ENCODE measurements at regions of chr10 and their contacts with region 1.

Region 1: GRCh38 chr10:112183329-112184051 is at the start of gene GPAM:
- DNase-seq: peak; percentile 91 to 99 (median 96)

Region 2: DNA sequence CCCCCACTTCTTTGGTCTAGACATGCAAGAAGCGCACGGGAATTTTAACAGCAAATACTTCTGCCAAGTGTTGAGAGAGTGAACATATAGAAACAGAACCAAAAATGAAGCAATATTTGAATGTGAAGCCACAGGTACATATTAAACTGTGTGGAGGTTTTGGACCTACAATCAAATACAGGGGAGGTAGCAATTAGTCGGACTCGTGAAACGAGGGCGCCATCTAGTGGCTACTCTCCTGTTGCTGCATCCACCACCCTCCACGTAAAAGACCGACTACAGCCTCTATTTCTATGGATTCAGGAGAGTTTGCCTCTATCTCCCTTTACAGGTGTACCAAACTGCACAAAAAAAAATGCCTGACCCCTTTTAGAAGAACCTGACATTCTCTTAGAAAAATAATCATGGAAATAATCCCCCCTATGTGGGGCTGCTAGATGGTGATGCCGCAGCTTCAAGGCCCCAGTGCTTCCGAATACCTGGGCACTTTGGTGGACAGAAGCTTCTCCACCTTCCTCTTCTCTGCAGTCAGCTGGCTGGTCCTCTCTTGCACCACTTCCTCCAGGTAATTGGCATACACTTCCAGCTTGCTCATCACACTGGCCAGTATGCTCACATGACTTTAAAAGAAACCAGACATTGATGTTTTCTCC is 131.5 kb after region 1 on chr10:
- intact Hi-C with region 1: loop called (anchors 5 kb)
- DNase-seq: peak; percentile 64 to 96 (median 87)

Region 3: DNA sequence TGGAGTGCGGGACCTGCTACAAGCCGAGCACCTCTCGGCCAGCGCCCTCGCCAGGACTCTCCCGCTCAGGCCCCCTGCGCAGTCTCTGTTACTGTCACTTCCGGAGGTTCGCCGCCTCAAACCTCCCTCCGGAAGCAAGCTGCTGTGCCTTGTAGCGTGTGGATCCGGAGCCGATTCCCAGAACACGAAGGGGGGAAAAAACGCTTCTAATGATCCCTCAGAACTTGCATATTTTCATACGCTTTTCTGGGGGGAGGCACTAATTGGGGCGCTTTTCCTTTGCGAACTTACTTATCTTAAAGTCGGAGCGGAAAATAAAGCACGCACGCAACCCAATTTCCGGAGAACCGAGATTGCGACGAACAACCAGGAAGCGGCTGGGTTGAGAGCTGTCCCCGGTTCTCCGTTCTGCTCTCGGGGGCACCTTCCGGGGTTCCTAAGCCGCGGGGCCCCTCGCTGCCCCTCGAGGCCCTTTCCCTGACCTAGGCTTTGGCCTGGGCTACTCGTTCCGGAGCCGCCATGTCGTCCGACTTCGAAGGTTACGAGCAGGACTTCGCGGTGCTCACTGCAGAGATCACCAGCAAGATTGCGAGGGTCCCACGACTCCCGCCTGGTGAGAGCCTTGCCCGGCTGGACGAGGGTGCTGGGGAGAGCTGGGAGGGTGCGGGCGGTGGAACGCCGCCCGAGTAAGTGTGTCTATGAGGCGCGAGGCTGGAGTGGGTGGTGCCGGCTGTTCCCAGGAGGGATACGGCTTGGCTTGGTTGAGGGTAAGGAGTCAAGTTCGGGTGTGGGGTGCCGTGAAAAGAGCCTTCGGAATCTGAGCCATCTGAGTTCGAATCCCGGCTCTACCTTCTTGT is 263.6 kb after region 1 on chr10 and contains the starts of genes VTI1A and ZDHHC6:
- intact Hi-C with region 1: loop called (anchors 10 kb)
- DNase-seq: peak; percentile 77 to 97 (median 85)

Measured in posterior cingulate gyrus (tissue), 11 donors.